ENCODE measurements at regions of chr15 and their contacts with region 1.

Region 1: DNA sequence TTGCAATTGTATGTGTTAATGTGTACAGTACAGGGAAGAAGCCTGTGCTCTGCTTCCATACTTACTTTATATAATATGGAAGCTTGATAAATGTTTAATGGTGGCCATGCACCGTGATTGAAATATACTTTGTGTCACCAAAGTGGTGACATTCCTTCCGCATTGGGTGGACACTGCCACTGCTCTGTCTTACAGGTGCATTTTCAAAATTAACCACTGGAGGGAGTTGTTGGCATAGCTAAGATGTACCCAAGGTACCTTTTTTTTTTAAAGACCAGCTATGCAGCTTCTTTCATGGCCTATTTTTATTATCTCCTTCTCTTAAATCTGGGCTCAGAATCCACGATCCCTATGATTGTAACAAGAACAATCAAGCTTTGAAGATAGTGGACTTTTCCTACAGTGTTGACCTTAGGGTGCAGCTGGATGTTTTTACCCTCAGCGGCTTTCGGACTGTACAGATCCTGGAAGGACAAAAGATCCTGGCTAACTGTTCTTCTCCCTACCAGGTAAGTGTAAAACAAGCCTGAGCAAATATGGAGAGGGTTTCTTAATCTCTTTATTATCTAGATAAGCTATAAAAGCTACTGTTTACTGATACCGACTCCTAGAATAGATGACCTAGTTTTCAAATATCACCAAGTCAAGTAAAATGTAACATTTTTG is 21.6 kb upstream of the PAK6 start:
- DNase-seq: peak; percentile 48
- H3K4me3 ChIP-seq: no peak overlapping the region
- H3K27ac ChIP-seq: no peak overlapping the region
- H3K4me1 ChIP-seq: no peaks in the 10 kb centered on the region
- H3K27me3 ChIP-seq: no peaks in the 10 kb centered on the region
- CTCF ChIP-seq: peak; percentile 79 to 81

Region 2: DNA sequence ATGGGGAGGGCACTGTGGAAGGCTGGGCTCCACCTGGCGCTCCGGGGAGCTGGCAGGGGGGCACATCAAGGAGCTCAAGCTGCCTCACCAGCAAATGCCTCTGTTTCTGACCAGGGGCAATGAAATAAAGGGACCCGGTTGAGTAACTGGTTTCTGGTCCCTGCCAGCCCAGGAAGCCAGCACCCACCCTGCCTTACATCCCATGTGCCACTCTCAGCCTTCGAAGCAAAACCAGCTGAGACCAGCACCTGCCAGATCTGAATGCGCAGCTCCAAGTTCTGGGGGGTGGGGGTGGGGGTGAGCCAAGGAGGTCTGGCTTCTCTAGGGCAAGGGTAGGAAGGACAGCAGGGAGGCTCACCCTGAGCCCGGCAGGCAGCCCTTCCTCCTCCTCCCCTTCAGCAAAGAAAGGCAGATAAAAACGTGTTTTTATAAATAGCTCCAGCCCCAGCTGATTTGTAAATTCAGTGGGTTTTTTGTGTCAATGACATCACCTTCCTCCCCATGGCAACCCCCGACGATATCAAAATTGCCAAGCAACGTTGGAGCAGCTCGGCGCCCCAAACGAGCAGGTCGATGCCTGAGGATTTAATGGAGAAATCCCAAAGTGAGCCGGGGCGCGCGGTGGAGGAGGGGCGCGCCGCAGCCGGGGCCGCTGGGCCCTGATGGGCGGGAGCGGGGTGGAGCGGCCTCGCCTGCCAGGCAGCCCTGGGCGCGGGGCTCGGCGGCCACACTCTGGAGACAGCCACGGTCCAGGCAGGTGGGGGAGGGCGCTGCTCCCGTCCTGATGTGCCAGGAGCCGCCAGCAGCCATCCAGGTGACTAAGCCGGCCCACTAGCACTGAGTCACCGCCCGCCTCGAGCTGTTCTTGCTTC is 21.5 kb after region 1 on chr15 and contains the start of gene PAK6:
- CTCF ChIA-PET with region 1: interaction called, 5 read pairs
- dilution Hi-C with region 1: no loop called
- in situ Hi-C with region 1: no loop called
- intact Hi-C with region 1: loop called (anchors 2 kb)
- DNase-seq: peak; percentile 95
- H3K4me3 ChIP-seq: peak within 1 kb of the TSS; percentile 23 to 73 (median 61)
- H3K27ac ChIP-seq: peak within 1 kb of the TSS; percentile 75
- H3K4me1 ChIP-seq: peaks cover 73% of the 10 kb centered on the region
- H3K27me3 ChIP-seq: no peaks in the 10 kb centered on the region
- CTCF ChIP-seq: no peak
- total RNA-seq, gene PAK6: 13.7 to 33.8 TPM

Region 3: GRCh38 chr15:40338041-40338657 is 120.9 kb after region 1 on chr15:
- CTCF ChIA-PET with region 1: no interaction called
- dilution Hi-C with region 1: no loop called
- in situ Hi-C with region 1: no loop called
- intact Hi-C with region 1: loop called (anchors 2 kb)
- DNase-seq: peak; percentile 66
- H3K4me3 ChIP-seq: peak overlapping the region in 2 of 3 experiments; percentile 1 to 81
- H3K27ac ChIP-seq: peak overlapping the region; percentile 68
- H3K4me1 ChIP-seq: peaks cover 75% of the 10 kb centered on the region
- H3K27me3 ChIP-seq: no peaks in the 10 kb centered on the region
- CTCF ChIP-seq: peak; percentile 63 to 86

Measured in mammary epithelial cell (primary cell).